H1 (cell line): ENCODE measurements at regions of chr19 and their contacts with region 1.

Region 1: DNA sequence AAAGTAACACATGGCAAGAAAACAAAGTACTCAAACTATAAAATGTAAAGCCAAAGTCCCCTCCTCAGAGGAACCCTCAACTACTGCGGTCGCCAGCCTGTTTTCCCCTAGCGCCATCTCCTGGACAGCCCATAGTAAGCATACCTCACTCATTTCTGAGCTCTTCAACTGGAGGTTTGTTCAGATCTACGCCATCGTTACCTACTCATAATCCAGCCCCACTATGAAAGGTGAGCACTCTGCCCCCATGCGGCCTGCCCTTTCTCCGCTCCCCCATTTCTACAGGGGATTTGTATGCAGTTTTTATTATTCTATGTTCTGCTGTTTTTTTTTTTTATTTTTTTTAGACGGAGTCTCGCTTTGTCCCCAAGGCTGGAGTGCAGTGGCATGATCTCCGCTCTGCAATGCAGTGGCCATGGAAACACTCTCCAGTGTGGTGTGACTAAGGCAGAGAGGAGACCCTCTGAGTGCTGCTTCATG is 26.2 kb downstream of the OPA3 start:
- DNase-seq: peak in 1 of 2 experiments; percentile 79
- H3K4me3 ChIP-seq: no peak overlapping the region
- H3K27ac ChIP-seq: no peak overlapping the region
- H3K4me1 ChIP-seq: peaks cover 0 to 6% (median 2%) of the 10 kb centered on the region in 4 experiments; a peak in 6 of 7 replicates
- H3K27me3 ChIP-seq: no peaks in the 10 kb centered on the region
- CTCF ChIP-seq: peak; percentile 70 to 92 (median 92)
- EP300 ChIP-seq: no peak
- POLR2A ChIP-seq: no peak
- RAD21 ChIP-seq: peak; percentile 77 to 83

Region 2: GRCh38 chr19:45460807-45461363 is 97.6 kb before region 1 on chr19:
- CTCF ChIA-PET with region 1: no interaction called
- POLR2A ChIA-PET with region 1: no interaction called
- DNase-seq: no peak
- H3K4me3 ChIP-seq: no peak overlapping the region
- H3K27ac ChIP-seq: no peak overlapping the region
- H3K4me1 ChIP-seq: peaks cover 0 to 7% (median 4%) of the 10 kb centered on the region in 4 experiments; a peak in 5 of 7 replicates
- H3K27me3 ChIP-seq: no peaks in the 10 kb centered on the region; a peak in 3 of 7 replicates
- CTCF ChIP-seq: no peak
- EP300 ChIP-seq: no peak
- POLR2A ChIP-seq: no peak
- RAD21 ChIP-seq: no peak

Region 3: DNA sequence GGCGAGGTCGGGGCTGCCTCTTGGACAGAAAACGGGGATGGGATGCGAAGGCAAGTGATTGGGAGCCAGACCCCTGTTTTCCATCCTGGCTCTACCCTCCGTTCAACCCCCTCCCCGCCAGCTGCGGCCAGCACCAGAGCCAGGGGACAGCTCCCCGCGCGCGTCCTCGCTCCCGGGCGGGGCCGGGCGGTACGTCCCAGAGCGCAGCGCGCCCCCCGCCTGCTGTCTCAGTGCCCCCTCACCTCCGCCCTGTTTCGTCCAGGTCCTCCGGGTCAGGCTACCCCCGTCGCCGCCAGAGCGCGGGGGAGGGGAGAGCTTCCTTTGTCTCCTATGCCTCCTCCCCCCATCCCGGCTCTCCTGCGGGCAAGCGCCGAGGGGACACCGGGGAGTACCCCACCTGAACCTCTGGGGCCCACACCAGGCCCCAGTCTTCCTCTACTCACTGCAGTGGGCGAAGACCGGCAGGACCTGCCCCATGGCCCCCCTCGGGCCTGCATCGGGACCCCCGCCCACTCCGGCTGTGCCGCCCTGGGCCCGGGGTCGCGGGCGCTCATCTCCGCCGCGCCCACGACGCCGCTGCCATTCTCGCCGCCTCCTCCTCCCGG is 62.0 kb before region 1 on chr19:
- CTCF ChIA-PET with region 1: interaction called, 15 read pairs
- POLR2A ChIA-PET with region 1: interaction called, 3 read pairs
- DNase-seq: peak in 1 of 2 experiments; percentile 91
- H3K4me3 ChIP-seq: peak overlapping the region; percentile 53 to 83 (median 70)
- H3K27ac ChIP-seq: no peak overlapping the region
- H3K4me1 ChIP-seq: peaks cover 5 to 17% (median 15%) of the 10 kb centered on the region in 4 experiments; a peak in 6 of 7 replicates
- H3K27me3 ChIP-seq: peaks cover 0 to 10% (median 4%) of the 10 kb centered on the region in 4 experiments; a peak in 3 of 7 replicates
- CTCF ChIP-seq: no peak
- EP300 ChIP-seq: no peak
- POLR2A ChIP-seq: no peak
- RAD21 ChIP-seq: no peak

Region 4: DNA sequence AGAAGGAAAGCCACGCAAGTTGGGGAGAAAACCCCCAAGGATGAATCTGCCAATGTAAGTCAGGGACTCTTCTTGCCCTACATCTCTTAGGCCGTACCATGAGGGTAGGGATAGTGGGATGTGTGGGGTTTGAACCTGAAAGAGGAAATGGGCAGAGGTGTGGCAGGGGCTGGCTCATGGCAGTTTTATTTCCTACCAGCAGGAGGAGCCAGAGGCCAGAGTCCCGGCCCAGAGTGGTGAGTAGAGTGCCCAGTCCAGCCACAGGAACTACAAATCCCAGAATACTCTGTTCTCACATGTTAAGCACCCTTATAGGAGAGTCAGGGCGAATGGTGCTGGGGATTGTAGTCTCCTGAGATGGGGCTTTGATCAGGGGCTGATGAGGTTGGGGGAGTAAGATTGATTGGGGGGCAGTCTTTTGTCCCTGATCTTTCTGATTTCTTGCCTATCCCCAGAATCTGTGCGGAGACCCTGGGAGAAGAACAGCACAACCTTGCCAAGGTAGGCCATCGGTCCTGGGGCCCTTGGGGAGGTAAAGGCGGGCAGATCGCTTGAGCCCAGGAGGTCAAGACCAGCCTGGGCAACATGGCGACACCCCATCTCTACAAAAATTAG is 34.7 kb before region 1 on chr19:
- CTCF ChIA-PET with region 1: interaction called, 22 read pairs
- POLR2A ChIA-PET with region 1: interaction called, 14 read pairs
- DNase-seq: peak; percentile 64 to 88
- H3K4me3 ChIP-seq: no peak overlapping the region
- H3K27ac ChIP-seq: no peak overlapping the region
- H3K4me1 ChIP-seq: peaks cover 0 to 7% (median 5%) of the 10 kb centered on the region in 4 experiments; a peak in 5 of 7 replicates
- H3K27me3 ChIP-seq: no peaks in the 10 kb centered on the region
- CTCF ChIP-seq: peak; percentile 82 to 93 (median 83)
- EP300 ChIP-seq: no peak
- POLR2A ChIP-seq: no peak
- RAD21 ChIP-seq: peak; percentile 85 to 86

Region 5: GRCh38 chr19:45542234-45542668 is 16.2 kb before region 1 on chr19:
- CTCF ChIA-PET with region 1: interaction called, 37 read pairs
- POLR2A ChIA-PET with region 1: no interaction called
- DNase-seq: no peak
- H3K4me3 ChIP-seq: no peak overlapping the region
- H3K27ac ChIP-seq: no peak overlapping the region
- H3K4me1 ChIP-seq: no peaks in the 10 kb centered on the region
- H3K27me3 ChIP-seq: no peaks in the 10 kb centered on the region
- CTCF ChIP-seq: no peak
- EP300 ChIP-seq: no peak
- POLR2A ChIP-seq: no peak
- RAD21 ChIP-seq: no peak

Region 6: GRCh38 chr19:45569619-45570421 is 11.4 kb after region 1 on chr19:
- CTCF ChIA-PET with region 1: interaction called, 79 read pairs
- POLR2A ChIA-PET with region 1: interaction called, 3 read pairs
- DNase-seq: peak; percentile 46 to 96
- H3K4me3 ChIP-seq: no peak overlapping the region
- H3K27ac ChIP-seq: no peak overlapping the region
- H3K4me1 ChIP-seq: no peaks in the 10 kb centered on the region; a peak in 1 of 7 replicates
- H3K27me3 ChIP-seq: no peaks in the 10 kb centered on the region
- CTCF ChIP-seq: peak; percentile 93 to 98 (median 95)
- EP300 ChIP-seq: no peak
- POLR2A ChIP-seq: no peak
- RAD21 ChIP-seq: peak; percentile 79 to 87

Region 7: DNA sequence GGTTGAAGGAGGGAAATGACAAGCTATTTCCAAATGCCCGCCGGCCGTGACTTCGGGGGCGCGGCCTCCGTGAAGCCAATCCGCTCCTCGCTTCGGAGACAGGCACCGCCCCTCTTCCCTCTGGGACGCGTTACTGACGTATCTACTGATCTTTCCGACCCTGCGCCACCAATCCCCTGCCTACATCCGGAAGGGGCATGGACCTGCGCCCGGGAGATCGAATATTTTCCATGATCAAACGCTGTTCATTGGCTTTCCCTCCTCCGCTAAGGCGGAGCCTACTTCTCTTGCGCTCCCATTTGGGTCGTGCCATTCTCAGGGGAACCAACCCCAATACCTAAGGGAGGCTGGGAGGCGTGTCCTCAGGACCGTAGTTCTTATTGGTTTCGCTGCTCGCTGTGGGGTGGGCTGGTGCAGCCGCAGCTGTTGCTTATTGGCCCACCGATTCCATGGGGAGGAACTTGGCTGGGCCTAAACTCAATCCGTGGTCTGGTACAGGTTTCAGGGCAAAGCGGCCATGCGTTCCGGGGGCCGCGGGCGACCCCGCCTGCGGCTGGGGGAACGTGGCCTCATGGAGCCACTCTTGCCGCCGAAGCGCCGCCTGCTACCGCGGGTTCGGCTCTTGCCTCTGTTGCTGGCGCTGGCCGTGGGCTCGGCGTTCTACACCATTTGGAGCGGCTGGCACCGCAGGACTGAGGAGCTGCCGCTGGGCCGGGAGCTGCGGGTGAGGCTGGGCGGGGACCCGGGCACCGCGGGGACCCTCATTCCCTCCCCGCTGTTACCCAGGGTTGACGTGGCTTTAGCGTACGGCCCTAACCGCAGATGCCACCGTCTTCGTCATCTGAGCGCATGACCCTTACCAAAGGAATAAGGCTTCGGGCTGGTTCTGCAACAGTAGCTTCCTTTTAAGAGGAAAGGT is 134.0 kb after region 1 on chr19 and contains the start of gene QPCTL:
- CTCF ChIA-PET with region 1: no interaction called
- POLR2A ChIA-PET with region 1: no interaction called
- DNase-seq: peak; percentile 91 to 99
- H3K4me3 ChIP-seq: peak within 1 kb of the TSS; percentile 73 to 89 (median 84)
- H3K27ac ChIP-seq: peak within 1 kb of the TSS; percentile 79
- H3K4me1 ChIP-seq: no peaks in the 10 kb centered on the region; a peak in 1 of 7 replicates
- H3K27me3 ChIP-seq: no peaks in the 10 kb centered on the region
- CTCF ChIP-seq: no peak
- EP300 ChIP-seq: no peak
- POLR2A ChIP-seq: peak; percentile 71 to 80; a peak in 2 of 3 replicates
- RAD21 ChIP-seq: no peak
- total RNA-seq, gene QPCTL: 25.2 and 27.1 TPM in 2 replicates